Activated T-helper 2 cell treated with anti-CD3 and anti-CD28 coated beads, Interferon-gamma antibody, Interleukin-2, Interleukin-4, amounts not matched to agents 10 μg/mL and 5 μg/mL and 100 μg/mL, durations not matched to agents 14 hours and 24 hours and 36 hours (primary cell): ENCODE measurements at regions of chr3 and their contacts with region 1.

Region 1: DNA sequence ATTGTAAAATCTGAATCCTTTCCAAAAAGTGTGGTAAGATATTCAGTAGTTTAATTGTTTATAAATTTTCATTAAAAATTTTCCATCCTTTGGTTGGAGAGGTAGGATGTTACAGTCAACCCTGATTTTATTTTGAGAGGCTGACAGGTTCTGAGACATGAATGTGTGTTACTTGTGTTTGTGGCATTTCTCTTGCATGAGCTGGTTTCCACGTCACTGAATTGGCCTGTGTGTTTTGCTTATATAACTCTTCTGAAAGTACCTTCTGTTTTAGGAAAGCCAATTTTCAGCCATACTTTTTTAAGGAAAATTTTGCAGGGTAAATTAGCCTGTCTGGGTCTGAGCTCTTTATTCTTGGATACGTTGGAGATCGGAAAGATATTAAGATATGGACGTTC is 30.7 kb downstream of the PXYLP1 start:
- DNase-seq: no peak
- H3K4me3 Mint-ChIP-seq: peak overlapping the region; percentile 79
- H3K27ac Mint-ChIP-seq: peak overlapping the region; percentile 78
- H3K4me1 Mint-ChIP-seq: peaks cover 78% of the 10 kb centered on the region
- H3K27me3 Mint-ChIP-seq: no peaks in the 10 kb centered on the region

Region 2: DNA sequence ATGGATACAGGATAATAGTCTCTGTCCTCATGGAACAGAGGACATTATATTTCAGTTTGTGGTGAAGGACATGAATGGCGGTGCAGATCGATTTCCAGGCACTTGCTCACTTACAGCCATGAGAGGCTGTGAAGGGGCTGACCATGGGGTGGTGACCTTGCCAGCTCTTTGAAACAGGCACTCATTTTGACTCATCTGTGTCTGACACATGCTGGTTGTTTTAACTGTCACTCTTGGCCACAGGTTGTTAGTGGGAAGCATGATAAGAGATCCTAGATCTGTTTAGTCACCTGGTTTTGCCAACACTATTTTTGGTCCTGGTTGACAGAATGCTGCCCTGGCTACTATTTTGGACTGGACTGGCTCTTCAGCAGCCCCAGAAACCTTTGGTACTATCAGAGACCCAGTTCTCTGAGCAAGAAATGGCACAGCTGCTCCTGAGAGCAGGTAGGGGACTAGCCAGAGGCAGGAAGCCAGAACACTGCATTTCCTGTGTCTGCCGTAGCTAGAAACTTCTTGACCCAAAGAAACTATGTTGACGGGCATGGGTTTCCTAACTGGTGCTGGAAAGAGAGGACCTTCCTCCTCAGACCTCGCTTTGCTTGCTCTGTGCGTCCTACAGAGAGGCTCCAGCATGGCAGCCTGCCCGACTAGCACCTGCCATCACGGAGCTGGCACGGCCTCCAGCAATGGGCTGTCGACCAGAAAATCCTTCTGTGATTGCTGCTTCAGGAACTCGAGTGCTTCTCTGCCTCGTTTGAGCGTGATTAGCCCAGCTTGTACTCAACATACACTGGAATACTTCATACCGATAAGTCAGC is 24.4 kb before region 1 on chr3:
- intact Hi-C with region 1: loop called (anchors 1 kb)
- DNase-seq: no peak
- H3K4me3 Mint-ChIP-seq: peak overlapping the region; percentile 43
- H3K27ac Mint-ChIP-seq: peak overlapping the region; percentile 82
- H3K4me1 Mint-ChIP-seq: peaks cover 84% of the 10 kb centered on the region
- H3K27me3 Mint-ChIP-seq: no peaks in the 10 kb centered on the region

Region 3: DNA sequence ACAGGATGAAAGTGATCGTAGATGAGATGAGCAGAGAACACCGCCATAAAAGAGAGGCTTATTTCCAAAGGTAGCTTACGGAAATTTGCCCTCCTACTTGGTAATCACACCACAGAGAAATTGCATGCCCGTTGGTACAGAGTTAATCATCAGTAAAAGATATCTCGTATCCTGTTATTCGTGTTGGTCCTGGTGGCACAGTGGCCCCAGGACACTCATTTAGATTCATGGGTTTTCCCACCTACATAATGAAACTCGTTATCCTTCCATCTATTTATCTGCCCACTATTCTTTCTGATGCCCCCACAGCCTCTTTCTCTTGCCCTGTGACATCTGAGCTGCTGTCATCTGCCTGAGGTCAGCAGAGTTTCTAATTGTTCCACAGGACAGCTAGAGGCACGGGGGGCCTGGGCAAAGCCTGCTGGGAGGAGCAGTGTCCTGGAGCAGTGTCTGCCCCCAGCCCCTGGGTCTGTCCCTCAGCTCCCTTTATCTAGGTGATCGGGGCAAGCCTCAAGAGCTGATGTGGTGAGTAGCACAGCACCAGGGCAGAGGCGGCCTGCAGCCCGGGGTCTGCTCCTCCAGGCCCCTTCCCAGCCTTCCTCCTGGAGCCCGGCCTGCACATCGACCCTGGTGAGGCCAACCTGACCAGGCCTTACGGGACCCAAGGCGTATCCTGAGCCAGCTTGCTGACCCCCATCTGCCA is 11.5 kb after region 1 on chr3:
- intact Hi-C with region 1: loop called (anchors 1 kb)
- DNase-seq: no peak
- H3K4me3 Mint-ChIP-seq: peak overlapping the region; percentile 14
- H3K27ac Mint-ChIP-seq: peak overlapping the region; percentile 98
- H3K4me1 Mint-ChIP-seq: peaks cover 68% of the 10 kb centered on the region
- H3K27me3 Mint-ChIP-seq: no peaks in the 10 kb centered on the region